ENCODE measurements at regions of chr17 and their contacts with region 1.

Region 1: DNA sequence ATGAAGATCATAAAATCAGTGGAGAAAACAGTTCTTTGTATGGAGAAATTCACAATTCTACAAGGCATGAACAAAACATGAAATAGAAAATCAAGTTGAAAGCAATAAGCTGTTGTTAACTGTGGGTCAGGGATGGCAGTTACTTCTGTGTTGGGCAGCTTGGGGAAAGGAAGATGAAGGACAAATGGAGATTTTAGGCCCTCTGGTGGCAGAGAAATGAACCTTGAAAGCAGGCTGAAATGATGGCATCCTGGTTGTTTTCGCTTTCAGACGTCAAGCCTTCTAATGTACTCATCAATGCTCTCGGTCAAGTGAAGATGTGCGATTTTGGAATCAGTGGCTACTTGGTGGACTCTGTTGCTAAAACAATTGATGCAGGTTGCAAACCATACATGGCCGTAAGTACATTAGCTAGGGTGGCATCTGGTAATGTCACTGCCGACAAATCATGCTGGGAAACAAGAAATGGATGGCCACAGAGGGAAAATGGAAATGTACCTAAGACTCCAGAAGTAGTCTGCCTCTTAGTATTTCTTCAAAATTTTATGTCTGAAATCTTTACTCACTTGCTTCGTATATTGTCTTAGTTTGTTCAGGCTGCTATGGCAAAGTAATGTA is 108.9 kb downstream of the MAP2K6 start:
- DNase-seq: peak; percentile 24
- H3K4me3 ChIP-seq: no peak overlapping the region
- H3K27ac ChIP-seq: no peak overlapping the region
- H3K27me3 ChIP-seq: no peaks in the 10 kb centered on the region
- CTCF ChIP-seq: peak; percentile 86

Region 2: GRCh38 chr17:69335058-69335457 is 188.3 kb before region 1 on chr17:
- CTCF ChIA-PET with region 1: interaction called, 80 read pairs
- POLR2A ChIA-PET with region 1: no interaction called
- DNase-seq: no peak
- H3K4me3 ChIP-seq: no peak overlapping the region
- H3K27ac ChIP-seq: no peak overlapping the region
- H3K27me3 ChIP-seq: no peaks in the 10 kb centered on the region
- CTCF ChIP-seq: peak; percentile 49

Region 3: DNA sequence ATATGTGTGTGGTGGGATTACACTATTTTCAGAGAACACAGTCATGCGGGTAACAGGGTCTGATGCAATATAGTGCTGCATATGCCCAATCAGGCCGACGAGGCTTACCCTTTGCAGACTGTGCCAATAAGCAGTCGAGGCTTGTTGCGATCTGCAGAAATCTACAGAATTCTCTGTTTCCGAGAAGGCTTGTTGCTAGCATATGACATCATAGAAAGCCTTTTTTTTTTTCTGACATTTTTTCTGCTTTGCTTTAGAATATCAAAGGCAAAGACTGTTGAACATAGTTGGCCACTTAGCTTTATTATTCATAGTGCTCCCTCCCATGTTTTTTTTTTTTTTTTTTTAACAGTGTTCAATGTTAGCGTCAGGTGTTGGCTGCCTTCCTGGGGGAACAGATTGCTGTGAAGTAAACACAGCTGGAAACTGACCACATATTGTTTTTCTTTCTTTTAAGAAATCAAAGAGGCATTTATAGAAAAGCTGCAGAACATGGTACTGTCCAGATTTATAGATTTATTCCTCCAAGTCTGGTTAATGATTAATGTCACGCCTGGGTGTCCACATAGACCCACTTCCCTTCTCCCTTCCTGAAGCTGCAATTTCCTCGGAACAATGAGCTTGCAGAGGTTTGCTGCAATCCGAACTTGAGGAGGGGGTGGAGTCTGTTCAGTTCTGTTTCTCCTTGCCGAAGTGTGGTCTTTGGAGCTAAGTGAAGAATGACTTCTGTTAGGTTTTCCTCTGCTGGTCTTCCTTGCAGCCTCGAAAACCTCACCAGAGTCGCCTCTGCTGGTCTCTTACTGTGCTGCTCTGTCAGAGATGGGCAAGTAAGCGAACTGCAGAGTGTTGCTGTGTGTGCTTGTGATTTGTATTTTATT is 21.5 kb before region 1 on chr17:
- CTCF ChIA-PET with region 1: interaction called, 113 read pairs
- POLR2A ChIA-PET with region 1: interaction called, 4 read pairs
- DNase-seq: peak; percentile 82
- H3K4me3 ChIP-seq: peak overlapping the region; percentile 45
- H3K27ac ChIP-seq: peak overlapping the region; percentile 80
- H3K27me3 ChIP-seq: no peaks in the 10 kb centered on the region
- CTCF ChIP-seq: no peak

Region 4: DNA sequence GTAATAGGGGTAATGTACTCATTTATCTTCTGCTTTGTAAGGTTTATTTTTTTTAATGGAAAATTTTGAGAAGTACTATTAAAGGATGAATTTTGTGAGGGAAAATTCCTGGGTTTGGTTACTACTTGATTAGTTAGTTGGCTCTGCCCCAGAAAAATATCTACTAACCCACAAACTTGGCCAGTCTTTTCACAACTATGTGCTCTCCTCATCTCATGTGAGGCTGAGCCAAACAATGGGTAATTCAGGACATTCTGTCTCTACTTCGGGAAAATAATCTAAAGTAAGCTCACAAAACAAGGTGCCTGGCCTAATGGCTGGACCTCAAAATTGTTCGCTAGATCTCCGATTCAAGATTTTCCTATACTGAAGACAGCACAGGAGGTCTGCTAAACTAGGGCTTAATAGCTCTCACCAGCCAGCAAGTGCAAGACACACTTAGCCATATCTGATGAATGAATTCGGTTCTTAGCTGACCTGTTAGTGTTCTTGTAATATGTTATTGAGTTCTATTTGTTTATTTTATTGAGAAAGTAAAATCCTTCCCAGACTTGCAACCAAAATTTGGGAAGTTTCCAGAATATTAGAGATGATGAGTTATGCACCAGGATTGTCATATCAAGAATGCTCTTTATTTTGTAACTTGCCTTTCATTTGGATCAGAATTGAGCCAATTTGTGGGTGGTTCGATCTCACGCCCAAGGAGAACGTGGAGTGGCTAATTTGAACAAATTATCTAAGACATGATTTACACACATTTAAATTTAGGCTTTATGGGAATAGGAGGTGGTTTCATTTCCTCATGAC is 557.4 kb after region 1 on chr17:
- CTCF ChIA-PET with region 1: no interaction called
- POLR2A ChIA-PET with region 1: no interaction called
- DNase-seq: no peak
- H3K4me3 ChIP-seq: no peak overlapping the region
- H3K27ac ChIP-seq: no peak overlapping the region
- H3K27me3 ChIP-seq: no peaks in the 10 kb centered on the region
- CTCF ChIP-seq: no peak

Region 5: DNA sequence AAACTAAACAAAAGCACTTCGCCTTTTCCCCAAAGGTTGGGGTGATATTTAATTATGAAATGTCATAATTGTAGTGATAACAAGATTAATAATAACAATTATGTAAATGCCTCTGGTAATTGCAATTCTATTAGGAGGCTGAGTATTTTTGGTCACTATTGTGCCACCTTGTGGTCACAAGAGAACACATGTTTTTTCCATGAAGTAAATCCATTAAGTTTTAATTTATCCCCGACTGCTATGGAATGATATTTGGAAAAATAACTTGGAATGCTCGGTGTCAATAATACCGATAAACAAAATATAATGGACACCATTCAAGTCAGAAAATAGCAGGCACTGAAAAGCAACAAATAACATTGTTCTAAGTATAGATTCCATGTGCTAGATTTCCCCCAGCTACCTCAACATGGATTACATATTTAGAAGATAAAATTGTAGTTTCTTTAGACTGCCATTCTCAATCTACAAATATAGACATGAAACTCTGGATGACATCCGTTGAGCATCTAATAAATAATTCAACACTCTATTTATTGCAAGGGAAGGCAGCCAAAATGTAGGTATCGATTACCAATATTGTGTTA is 621.0 kb after region 1 on chr17:
- CTCF ChIA-PET with region 1: interaction called, 18 read pairs
- POLR2A ChIA-PET with region 1: no interaction called
- DNase-seq: no peak
- H3K4me3 ChIP-seq: no peak overlapping the region
- H3K27ac ChIP-seq: no peak overlapping the region
- H3K27me3 ChIP-seq: no peaks in the 10 kb centered on the region
- CTCF ChIP-seq: peak; percentile 60

Region 6: GRCh38 chr17:70208825-70209555 is 685.6 kb after region 1 on chr17:
- CTCF ChIA-PET with region 1: interaction called, 13 read pairs
- POLR2A ChIA-PET with region 1: no interaction called
- DNase-seq: no peak
- H3K4me3 ChIP-seq: no peak overlapping the region
- H3K27ac ChIP-seq: no peak overlapping the region
- H3K27me3 ChIP-seq: no peaks in the 10 kb centered on the region
- CTCF ChIP-seq: no peak

Region 7: DNA sequence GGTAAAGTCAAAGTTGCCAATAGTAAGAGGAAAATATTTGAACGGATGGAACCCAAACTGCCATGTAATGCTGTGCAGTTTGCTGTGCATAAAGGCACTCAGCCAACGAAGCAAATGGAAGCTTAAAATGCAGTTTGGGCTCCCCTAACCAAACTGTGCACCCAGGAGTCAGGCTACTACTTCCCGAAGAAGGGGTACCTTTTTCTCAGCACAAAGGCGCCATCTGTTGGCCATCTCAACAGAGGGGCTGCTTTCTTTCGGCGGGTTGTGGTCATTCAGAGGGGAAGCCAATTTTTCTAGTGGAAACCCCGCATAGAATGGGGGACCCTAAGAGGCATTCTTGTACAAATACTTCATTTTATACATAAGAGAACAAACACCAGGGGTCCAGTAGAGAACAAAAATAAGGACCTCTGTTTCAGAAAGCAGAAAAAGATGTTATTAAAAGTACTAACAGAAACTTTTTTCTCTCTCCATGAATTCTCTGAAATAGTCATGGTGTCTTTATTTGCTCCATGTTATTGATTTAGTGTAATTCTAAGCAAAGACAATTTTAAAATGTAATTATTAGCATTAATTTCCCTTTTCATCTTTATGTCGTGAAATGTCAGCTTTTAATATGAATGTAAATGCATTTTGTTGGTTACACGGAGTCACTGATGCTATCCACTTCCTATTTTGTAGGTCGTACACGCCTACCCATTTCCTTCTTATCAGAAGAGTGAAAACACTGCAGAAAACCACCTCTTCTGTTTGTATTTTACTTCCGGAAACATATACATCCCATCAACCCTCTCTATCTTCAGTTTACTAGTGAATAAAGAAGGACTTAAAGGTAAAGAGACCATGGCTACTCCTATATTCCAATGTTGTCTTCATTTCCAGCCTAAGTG is 1099.3 kb after region 1 on chr17:
- CTCF ChIA-PET with region 1: interaction called, 12 read pairs
- POLR2A ChIA-PET with region 1: no interaction called
- DNase-seq: no peak
- H3K4me3 ChIP-seq: no peak overlapping the region
- H3K27ac ChIP-seq: no peak overlapping the region
- H3K27me3 ChIP-seq: no peaks in the 10 kb centered on the region
- CTCF ChIP-seq: peak; percentile 49